Gastrocnemius medialis (tissue), 4 donors: ENCODE measurements at regions of chr9 and their contacts with region 1.

Region 1: DNA sequence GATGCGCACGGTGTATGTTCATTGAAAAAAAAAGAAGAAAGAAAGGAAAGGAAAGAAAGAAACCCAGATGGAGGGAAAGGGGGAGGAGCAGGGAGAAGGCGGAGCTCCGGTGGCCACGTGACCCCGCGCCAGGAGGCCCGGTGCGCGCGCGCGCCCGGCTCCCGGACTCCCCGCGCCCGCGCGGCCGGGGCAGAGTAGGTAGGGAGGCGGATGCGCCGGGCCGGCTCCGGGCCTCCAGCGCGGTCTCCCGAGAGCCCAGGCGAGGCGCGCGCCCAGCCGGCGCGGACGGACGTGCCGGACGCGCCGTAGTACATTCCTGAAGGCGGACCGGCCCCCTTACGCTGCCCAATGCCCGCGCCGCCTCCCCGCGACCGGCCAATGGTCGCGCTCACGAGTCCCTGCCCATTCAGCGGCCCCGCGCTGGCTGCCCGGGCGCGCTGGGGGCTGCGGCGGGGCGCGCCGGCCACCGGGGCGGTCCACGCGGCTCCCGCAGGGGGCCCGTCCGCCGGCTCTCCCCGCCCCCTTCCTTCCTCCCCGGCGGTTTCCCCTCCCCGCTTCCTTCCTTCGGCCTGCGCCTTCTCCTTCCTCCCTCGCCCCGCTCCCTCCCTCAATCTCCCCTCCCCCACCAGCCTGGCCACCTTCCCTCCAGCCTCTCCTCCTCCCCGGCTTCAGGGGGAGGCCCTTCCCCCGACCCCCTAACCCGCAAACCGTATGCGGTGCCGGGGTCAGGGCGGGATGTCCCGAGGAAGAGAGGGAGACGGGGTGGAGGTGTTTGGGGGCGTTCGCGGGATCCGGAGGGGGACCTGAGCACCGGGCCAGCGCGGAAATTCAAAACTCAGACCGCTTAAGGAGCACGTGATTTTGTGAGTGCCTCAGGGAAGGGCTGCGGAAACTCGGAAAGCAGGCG is 5.8 kb downstream of the PTCH1 start:
- DNase-seq: peak; percentile 79 to 88
- ATAC-seq: peak; percentile 64 to 71
- H3K4me3 ChIP-seq: peak overlapping the region; percentile 63 to 95 (median 78)
- H3K27ac ChIP-seq: peak overlapping the region; percentile 84 to 96 (median 91)
- H3K4me1 ChIP-seq: peaks cover 6 to 13% of the 10 kb centered on the region in 2 donors
- H3K27me3 ChIP-seq: peaks cover 0 to 18% (median 15%) of the 10 kb centered on the region in 3 donors
- CTCF ChIP-seq: peak in 1 of 5 experiments; percentile 10
- POLR2A ChIP-seq: peak; percentile 83 to 92

Region 2: GRCh38 chr9:95092262-95093072 is 418.5 kb before region 1 on chr9:
- in situ Hi-C with region 1: no loop called
- intact Hi-C with region 1: loop called (anchors 10 kb)
- DNase-seq: peak in 1 of 2 donors; percentile 56
- ATAC-seq: peak in 1 of 2 donors; percentile 8
- H3K4me3 ChIP-seq: no peak overlapping the region
- H3K27ac ChIP-seq: peak overlapping the region; percentile 87 to 96 (median 90)
- H3K4me1 ChIP-seq: peaks cover 85% of the 10 kb centered on the region in 2 donors
- H3K27me3 ChIP-seq: no peaks in the 10 kb centered on the region
- CTCF ChIP-seq: no peak
- POLR2A ChIP-seq: no peak

Region 3: DNA sequence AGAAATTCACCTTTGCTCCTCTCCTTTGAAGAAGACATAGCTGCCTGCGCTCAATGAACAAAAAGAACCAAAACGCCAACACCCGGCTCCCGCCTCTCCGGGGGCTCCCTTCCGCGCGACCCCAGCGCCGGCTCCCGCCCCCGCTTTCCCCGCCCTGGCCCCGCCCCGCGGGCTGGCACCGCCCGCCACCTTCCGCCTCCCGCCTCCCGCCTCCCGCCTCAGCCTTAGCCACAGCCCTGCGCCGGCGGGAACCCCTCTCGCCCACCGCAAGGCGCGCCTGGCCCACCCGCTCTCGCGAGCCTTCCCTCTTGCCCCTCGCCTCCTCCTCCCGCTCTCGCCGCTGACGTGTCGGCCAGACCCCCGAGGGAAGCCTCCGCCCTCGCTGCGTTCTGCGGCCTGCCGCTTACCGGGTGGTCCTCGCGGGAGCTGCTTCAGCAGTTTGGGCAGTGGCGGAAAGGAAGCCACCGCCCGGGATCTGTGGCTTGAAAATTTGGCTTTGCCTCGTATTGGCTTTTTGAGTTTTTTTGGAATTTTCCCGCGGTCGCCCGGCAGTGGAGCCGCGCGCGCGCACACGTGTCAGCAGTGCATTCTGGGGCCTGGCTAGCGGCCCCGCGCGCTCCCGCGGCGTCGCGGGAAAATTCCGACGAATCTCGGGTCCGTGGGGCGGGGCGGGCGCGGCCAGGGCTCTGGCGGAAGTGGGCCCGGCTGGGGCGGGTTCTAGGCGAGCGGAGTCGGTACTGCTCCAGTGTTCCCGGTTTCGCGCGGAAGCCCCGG is 193.7 kb before region 1 on chr9 and contains the start of gene FANCC:
- in situ Hi-C with region 1: loop called in 2 of 4 experiments (anchors 25 kb)
- intact Hi-C with region 1: loop called (anchors 1 kb)
- DNase-seq: peak; percentile 72 to 80
- ATAC-seq: peak; percentile 88
- H3K4me3 ChIP-seq: peak within 1 kb of the TSS; percentile 78 to 100 (median 97)
- H3K27ac ChIP-seq: peak within 1 kb of the TSS; percentile 91 to 98 (median 94)
- H3K4me1 ChIP-seq: peaks cover 8 to 15% of the 10 kb centered on the region in 2 donors
- H3K27me3 ChIP-seq: no peaks in the 10 kb centered on the region
- CTCF ChIP-seq: no peak
- POLR2A ChIP-seq: peak in 1 of 2 donors; percentile 23
- total RNA-seq, gene FANCC: 1.2 to 4.8 (median 2.5) TPM

Region 4: GRCh38 chr9:95363051-95363841 is 147.7 kb before region 1 on chr9:
- in situ Hi-C with region 1: no loop called
- intact Hi-C with region 1: no loop called
- DNase-seq: no peak
- ATAC-seq: no peak
- H3K4me3 ChIP-seq: peak overlapping the region in 2 of 4 donors; percentile 2 to 27
- H3K27ac ChIP-seq: no peak overlapping the region
- H3K4me1 ChIP-seq: peaks cover 5 to 6% of the 10 kb centered on the region in 2 donors
- H3K27me3 ChIP-seq: no peaks in the 10 kb centered on the region
- CTCF ChIP-seq: no peak
- POLR2A ChIP-seq: no peak

Region 5: DNA sequence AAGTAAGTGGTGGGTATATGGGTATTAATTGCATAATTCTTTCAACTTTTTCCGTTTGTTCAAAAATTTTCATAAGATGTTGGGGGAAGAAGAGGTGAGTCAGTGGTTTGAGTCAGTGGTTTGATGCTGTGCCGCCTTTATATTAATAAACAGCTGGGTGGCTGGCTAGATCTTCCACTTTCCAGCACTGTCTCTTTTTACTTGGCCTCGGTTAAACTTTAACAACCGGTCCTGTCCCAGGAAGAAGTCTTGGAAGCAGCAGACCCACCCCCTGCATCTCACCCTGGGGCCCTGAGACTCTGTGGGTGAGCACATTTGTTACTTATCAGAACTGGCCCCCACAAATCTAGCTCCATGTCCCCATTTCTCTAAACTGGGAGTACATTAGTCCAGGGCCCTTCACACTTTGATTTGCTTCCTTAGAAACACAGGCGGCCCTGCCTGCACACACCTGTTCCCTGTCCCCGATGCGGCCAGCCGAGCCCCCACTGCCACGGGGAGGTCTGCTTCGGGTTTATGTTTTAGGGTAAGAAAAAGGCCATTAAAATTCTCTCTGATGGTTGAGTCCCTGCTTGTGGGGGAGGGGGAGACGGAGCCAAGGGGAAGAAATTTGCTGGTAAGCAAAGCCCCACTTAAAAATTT is 84.9 kb before region 1 on chr9:
- in situ Hi-C with region 1: no loop called
- intact Hi-C with region 1: loop called (anchors 5 kb)
- DNase-seq: no peak
- ATAC-seq: peak; percentile 36 to 46
- H3K4me3 ChIP-seq: peak overlapping the region; percentile 46 to 74 (median 56)
- H3K27ac ChIP-seq: peak overlapping the region; percentile 73 to 87 (median 80)
- H3K4me1 ChIP-seq: peaks cover 0 to 7% of the 10 kb centered on the region in 2 donors
- H3K27me3 ChIP-seq: no peaks in the 10 kb centered on the region
- CTCF ChIP-seq: no peak
- POLR2A ChIP-seq: no peak

Region 6: DNA sequence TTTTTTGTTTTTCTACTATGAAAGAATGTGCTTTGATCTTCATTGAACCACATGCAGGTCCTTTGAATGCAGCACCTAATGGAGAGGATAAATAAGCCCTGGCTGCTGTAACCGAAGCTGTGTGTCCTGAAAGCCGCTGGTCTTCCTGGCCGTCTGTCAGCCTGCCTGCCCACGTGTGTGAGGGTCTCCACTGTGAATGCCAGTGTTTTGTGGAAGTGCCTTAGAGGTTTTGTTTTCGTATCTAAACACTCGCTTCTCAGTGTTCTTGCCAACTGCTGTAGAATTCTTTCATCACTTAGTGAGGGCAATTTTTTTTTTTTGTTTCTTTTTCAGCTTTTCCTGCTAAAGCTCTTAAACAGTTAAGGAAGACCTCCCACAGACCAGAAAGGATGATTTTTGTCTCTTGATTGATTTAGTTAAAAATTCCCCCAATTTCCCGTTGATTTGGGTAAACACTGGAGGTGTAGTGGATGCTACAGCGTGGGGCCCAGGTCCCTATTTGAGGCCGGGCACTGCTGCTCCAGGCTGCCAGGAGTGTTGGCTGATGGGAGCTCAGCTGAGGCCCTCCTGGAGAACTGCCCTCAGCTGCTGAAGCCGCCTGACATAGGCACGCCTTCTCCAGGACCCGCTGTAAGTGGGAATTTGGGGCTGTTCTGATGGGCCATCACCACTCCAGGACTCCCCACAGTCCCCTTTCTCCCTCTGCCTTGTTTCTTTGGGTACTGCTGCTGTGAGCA is 35.0 kb after region 1 on chr9:
- in situ Hi-C with region 1: no loop called
- intact Hi-C with region 1: no loop called
- DNase-seq: no peak
- ATAC-seq: no peak
- H3K4me3 ChIP-seq: no peak overlapping the region
- H3K27ac ChIP-seq: no peak overlapping the region
- H3K4me1 ChIP-seq: no peaks in the 10 kb centered on the region
- H3K27me3 ChIP-seq: peaks cover 0 to 4% (median 0%) of the 10 kb centered on the region in 3 donors
- CTCF ChIP-seq: no peak
- POLR2A ChIP-seq: no peak

Region 7: DNA sequence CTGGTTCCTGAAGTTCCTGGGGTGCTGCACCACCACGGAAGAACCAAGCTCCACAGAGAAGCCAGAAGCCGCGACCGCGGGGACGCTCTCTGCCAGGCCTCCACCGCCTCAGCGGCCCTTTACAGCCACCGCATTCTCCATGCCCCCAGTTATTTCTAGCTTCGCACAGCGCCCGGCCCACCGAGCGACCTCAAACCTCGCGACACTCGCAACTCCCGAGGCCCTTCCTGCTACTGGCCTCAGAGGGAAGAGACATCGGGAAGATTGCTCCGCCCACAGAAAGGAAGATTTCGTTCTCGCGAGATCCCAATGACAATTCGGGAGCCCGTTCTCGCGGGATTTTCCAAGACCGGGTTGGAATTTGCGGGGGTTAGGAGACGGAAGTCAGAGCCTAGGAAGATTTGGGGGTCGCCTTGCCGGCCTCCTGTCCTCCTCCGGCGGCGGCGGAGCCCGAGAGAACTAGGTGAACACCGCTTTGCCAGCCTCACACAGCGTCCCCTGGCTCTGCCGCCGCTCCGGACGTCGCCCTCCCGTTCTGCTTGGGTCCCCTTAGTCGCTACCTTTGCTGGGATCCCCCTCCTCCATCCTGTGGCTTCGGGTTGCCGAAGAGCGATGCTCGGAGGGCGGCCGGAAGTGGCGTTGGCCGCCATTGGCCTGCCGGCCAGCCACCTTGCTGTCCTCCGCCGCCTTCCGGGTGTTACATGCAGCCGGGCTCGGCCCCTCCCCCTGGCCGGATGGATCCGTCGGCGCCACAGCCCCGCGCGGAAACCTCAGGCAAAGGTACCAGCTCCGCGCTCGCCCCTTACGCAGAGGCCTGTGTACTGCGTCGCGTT is 364.6 kb after region 1 on chr9 and contains the start of gene ERCC6L2:
- in situ Hi-C with region 1: loop called in 3 of 4 experiments (anchors 10 to 25 kb)
- intact Hi-C with region 1: loop called (anchors 2 kb)
- DNase-seq: peak; percentile 90 to 95
- ATAC-seq: peak; percentile 95 to 97
- H3K4me3 ChIP-seq: no peak within 1 kb of the TSS
- H3K27ac ChIP-seq: no peak within 1 kb of the TSS
- H3K4me1 ChIP-seq: peaks cover 11 to 19% of the 10 kb centered on the region in 2 donors
- H3K27me3 ChIP-seq: no peaks in the 10 kb centered on the region
- CTCF ChIP-seq: no peak
- POLR2A ChIP-seq: peak; percentile 50 to 69
- total RNA-seq, gene ERCC6L2: 24.2 to 46.2 (median 35.9) TPM

Region 8: GRCh38 chr9:96418074-96418809 is 907.3 kb after region 1 on chr9 and contains the start of gene ZNF367:
- in situ Hi-C with region 1: no loop called
- intact Hi-C with region 1: loop called (anchors 10 kb)
- DNase-seq: peak; percentile 96 to 98
- ATAC-seq: peak; percentile 77 to 82
- H3K4me3 ChIP-seq: peak within 1 kb of the TSS; percentile 71 to 89 (median 84)
- H3K27ac ChIP-seq: peak within 1 kb of the TSS; percentile 99
- H3K4me1 ChIP-seq: peaks cover 21 to 26% of the 10 kb centered on the region in 2 donors
- H3K27me3 ChIP-seq: no peaks in the 10 kb centered on the region
- CTCF ChIP-seq: no peak
- POLR2A ChIP-seq: peak in 1 of 2 donors; percentile 8
- total RNA-seq, gene ZNF367: 0.15 to 5.1 (median 1.7) TPM